AG04449 (cell line): ENCODE measurements at regions of chr6 and their contacts with region 1.

Region 1: DNA sequence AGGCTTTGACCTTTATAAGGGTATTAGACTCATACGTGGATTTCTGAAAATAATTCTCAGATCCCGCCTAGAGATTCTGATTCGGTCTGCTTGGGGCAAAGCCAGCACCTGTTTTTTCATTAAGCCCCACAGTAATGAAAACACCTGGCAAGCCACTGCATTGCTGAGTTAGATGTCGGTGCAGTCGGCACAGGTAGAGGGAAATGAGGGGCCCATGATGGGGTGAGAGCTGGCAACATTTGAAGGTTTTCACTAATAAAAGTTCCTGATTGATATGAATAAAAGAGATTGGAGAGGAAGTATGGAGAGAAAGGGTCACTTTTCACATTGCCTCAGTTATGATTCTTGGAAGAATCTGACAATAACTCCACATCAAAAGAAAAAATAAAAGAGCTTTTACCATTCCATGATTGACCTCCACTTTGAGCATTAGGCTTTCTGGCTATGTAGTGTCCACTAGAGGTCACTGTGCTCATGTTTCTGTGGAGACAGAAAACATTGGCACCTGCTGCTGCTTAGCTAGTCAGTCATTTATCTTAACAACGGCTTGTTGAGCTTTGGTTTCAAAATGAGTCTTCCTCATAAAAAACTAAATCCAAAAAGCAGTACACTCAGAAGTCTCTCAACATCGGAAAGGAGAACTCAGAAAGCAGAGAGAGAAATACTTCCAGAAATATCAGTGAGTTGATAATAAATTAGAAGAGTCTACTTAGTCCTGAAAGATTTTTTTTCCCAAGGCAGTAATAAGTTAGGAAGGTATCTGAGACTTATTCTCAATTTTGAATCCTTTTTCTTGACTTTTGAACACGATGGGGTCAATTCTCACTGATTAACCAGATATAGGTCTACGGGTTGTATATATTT is 53.3 kb upstream of the KLHL31 start:
- DNase-seq: no peak
- H3K4me3 ChIP-seq: no peak overlapping the region
- CTCF ChIP-seq: peak; percentile 72

Region 2: GRCh38 chr6:53611342-53611741 is 107.5 kb before region 1 on chr6:
- CTCF ChIA-PET with region 1: no interaction called
- POLR2A ChIA-PET with region 1: no interaction called
- DNase-seq: no peak
- H3K4me3 ChIP-seq: no peak overlapping the region
- CTCF ChIP-seq: no peak

Region 3: GRCh38 chr6:53679446-53679933 is 39.3 kb before region 1 on chr6:
- CTCF ChIA-PET with region 1: interaction called, 12 read pairs
- POLR2A ChIA-PET with region 1: no interaction called
- DNase-seq: no peak
- H3K4me3 ChIP-seq: no peak overlapping the region
- CTCF ChIP-seq: peak; percentile 13

Region 4: DNA sequence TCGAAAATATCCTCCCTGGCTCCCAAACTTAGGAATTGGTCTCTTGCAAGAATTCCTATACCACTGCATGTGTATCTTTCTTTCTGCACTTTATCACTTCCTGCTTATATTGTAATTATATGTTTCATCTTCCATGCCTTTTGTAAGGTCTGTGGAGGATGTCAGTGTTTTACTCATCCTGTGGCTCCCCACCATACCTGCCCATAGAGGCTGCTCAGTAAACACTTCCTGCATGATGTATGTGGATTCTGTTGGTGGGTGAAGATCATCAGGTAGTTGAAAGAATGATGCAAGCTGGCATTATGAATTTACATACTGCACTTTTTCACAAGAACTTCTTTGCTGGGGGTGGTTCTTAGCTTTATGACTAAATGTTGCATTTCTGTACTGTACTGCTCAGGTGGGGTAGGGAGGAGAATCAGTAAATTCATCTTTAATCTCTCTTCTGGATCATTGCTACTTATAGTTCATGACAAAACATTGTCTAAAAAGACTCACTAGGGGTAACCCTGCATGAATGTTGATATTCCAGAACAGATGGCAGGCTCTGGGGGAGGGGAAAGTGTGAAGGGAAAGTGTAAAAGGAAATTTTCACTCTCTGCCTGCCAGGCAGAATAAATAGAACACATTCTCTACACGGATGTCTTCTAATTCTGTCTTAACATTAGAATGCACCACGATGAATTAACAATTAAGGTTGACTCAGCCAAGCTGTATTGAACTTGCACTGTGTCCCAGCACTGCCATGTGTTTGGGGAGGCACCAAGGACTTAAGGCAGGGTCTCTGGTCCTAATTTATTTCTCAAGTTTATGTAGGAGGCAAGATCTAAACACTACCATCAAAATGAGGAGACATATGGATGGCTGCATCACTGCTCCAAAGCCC is 17.3 kb before region 1 on chr6:
- CTCF ChIA-PET with region 1: interaction called, 119 read pairs
- POLR2A ChIA-PET with region 1: no interaction called
- DNase-seq: no peak
- H3K4me3 ChIP-seq: no peak overlapping the region
- CTCF ChIP-seq: no peak

Region 5: GRCh38 chr6:53734473-53735299 is 15.9 kb after region 1 on chr6:
- CTCF ChIA-PET with region 1: interaction called, 144 read pairs
- POLR2A ChIA-PET with region 1: interaction called, 3 read pairs
- DNase-seq: peak; percentile 64
- H3K4me3 ChIP-seq: no peak overlapping the region
- CTCF ChIP-seq: peak; percentile 51

Region 6: GRCh38 chr6:53862662-53863462 is 144.0 kb after region 1 on chr6:
- CTCF ChIA-PET with region 1: no interaction called
- POLR2A ChIA-PET with region 1: no interaction called
- DNase-seq: peak; percentile 37
- H3K4me3 ChIP-seq: no peak overlapping the region
- CTCF ChIP-seq: no peak